ENCODE measurements at regions of chr2 and their contacts with region 1.

Region 1: GRCh38 chr2:175282290-175282689 is 100.8 kb upstream of the ATP5MC3 start:
- DNase-seq: no peak
- ATAC-seq: peak; percentile 83
- H3K4me3 ChIP-seq: no peak overlapping the region
- H3K27ac ChIP-seq: no peak overlapping the region
- H3K4me1 ChIP-seq: no peaks in the 10 kb centered on the region
- H3K27me3 ChIP-seq: no peaks in the 10 kb centered on the region; a peak in 1 of 4 replicates
- CTCF ChIP-seq: peak; percentile 24 to 49 (median 25); a peak in 4 of 6 replicates
- EP300 ChIP-seq: no peak
- POLR2A ChIP-seq: no peak
- RAD21 ChIP-seq: peak; percentile 61

Region 2: DNA sequence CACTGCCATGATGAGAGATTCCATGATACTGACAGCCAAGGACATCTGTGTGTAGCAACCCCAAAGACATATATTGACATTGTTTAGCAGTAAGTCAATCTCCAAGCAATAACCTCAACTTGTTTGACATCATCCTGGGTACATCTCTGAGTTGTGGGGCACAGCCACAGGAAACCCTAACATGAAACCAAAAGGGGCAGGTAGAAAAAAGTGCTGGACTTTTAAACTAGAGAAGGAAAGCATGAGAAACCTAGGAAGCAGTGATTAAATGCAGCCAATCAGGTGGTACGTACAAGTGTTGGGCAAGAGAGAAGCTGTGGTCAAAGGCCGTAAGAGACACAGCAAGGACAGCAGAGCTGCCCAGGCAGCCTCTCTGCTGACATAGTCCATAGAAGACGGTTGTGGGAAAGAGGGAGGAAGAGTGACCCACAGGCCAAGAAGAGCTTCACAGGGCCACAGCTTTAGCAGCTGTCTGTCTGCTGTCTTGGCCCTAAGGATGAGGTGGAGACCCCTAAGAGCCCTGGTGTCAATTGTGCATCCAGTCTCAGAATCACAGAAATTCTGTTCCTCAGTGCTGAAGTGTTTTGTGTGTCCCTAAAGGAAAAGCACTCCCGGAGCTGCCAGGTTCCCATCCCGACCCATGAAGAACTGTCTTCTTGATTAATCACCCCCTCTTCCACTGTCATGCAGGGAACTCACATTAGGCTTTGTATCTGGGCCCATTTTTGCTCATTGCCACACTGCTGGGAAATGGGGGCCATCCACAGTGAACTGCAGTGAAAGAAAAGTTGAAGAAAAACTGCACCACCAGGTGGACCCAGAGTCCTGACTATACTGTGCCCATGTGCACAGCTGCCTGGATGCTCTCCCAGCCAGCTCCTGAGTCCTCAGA is 251.7 kb before region 1 on chr2:
- CTCF ChIA-PET with region 1: interaction called, 5 read pairs
- POLR2A ChIA-PET with region 1: no interaction called
- RAD21 ChIA-PET with region 1: no interaction called
- SMC1A ChIA-PET with region 1: interaction called, 3 read pairs
- in situ Hi-C with region 1: no loop called
- intact Hi-C with region 1: loop called (anchors 5 kb)
- DNase-seq: no peak
- ATAC-seq: peak; percentile 80
- H3K4me3 ChIP-seq: no peak overlapping the region
- H3K27ac ChIP-seq: no peak overlapping the region
- H3K4me1 ChIP-seq: no peaks in the 10 kb centered on the region
- H3K27me3 ChIP-seq: no peaks in the 10 kb centered on the region
- CTCF ChIP-seq: peak; percentile 31 to 47 (median 41); a peak in 4 of 6 replicates
- EP300 ChIP-seq: no peak
- POLR2A ChIP-seq: no peak
- RAD21 ChIP-seq: peak; percentile 50

Region 3: GRCh38 chr2:175111200-175111657 is 171.1 kb before region 1 on chr2:
- CTCF ChIA-PET with region 1: interaction called, 4 read pairs
- POLR2A ChIA-PET with region 1: no interaction called
- RAD21 ChIA-PET with region 1: no interaction called
- SMC1A ChIA-PET with region 1: interaction called, 7 read pairs
- in situ Hi-C with region 1: no loop called
- intact Hi-C with region 1: loop called (anchors 1 kb)
- DNase-seq: peak; percentile 7
- ATAC-seq: peak; percentile 83
- H3K4me3 ChIP-seq: no peak overlapping the region
- H3K27ac ChIP-seq: no peak overlapping the region
- H3K4me1 ChIP-seq: no peaks in the 10 kb centered on the region
- H3K27me3 ChIP-seq: no peaks in the 10 kb centered on the region
- CTCF ChIP-seq: peak; percentile 62 to 69 (median 67)
- EP300 ChIP-seq: no peak
- POLR2A ChIP-seq: no peak
- RAD21 ChIP-seq: peak; percentile 81

Region 4: DNA sequence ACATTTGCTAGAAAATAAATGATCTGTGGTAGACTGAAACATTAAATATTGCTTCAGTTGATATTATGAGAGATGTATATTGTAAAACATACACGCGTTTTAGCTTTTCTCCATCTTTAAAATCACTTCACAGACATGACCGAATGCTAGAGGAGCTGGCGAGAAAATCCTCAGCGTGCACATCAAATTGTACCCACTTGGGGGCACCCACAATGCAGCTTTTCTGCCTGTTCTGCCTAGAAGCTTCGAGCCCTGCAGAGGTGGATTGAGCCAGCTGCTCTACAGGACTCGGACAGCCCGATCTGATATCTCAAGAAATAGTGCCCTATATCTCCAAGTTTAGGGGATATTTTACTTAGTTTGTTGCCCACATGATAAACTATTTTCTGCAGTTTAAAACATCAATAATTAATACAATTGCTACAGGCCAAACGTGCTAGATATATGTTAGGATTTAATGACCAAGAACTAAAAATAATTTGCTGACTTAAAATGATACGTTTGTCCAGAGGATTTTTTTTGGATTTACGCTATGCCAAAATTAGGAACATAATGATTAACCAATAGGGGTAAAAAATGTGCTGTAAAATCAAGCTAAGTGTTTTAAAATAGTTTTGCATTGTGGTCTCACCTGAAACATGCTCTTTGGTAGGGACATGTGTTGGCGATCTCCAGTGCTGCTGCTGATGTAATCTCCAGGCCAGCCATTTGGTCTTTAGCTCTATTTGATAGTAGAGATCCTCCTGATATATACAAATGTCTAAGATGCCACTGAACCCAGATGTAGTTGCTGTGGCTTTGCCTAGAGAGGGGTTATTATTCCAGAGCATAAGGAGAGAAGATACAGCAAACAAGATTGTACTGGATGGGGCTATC is 78.4 kb before region 1 on chr2:
- CTCF ChIA-PET with region 1: interaction called, 12 read pairs
- POLR2A ChIA-PET with region 1: no interaction called
- RAD21 ChIA-PET with region 1: no interaction called
- SMC1A ChIA-PET with region 1: interaction called, 5 read pairs
- in situ Hi-C with region 1: no loop called
- intact Hi-C with region 1: loop called (anchors 1 kb)
- DNase-seq: no peak
- ATAC-seq: peak; percentile 98
- H3K4me3 ChIP-seq: no peak overlapping the region
- H3K27ac ChIP-seq: no peak overlapping the region
- H3K4me1 ChIP-seq: no peaks in the 10 kb centered on the region
- H3K27me3 ChIP-seq: no peaks in the 10 kb centered on the region
- CTCF ChIP-seq: peak; percentile 53 to 55 (median 55)
- EP300 ChIP-seq: no peak
- POLR2A ChIP-seq: no peak
- RAD21 ChIP-seq: peak; percentile 55

Region 5: DNA sequence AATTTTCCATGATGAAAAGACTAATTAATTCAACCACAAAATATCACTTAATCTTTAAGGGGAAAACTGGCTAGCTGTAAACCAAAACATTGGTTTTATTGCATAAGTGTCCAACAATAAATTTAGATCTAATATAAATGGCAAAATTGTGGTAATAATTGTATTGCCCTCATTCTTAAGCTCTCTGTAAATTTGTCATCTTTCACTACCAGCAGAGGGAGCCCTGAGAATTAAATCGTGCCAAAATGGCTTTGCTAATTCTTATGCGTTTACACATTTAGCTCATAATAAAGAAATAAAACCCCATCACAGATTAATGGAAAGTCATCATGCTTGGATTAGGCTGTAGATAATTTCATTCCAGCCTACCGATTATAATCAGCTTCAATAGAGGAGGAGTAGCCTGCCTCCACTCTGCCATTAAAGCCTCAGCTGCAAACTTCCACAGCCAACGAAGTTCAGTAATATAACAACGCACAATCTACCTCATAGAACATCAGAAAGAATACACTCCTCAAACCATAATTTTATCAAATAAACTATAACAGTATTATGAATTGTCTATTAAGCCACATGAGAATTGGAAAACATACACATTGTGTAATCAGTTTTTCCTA is 30.8 kb before region 1 on chr2:
- CTCF ChIA-PET with region 1: interaction called, 46 read pairs
- POLR2A ChIA-PET with region 1: no interaction called
- RAD21 ChIA-PET with region 1: interaction called, 3 read pairs
- SMC1A ChIA-PET with region 1: interaction called, 7 read pairs
- in situ Hi-C with region 1: no loop called
- intact Hi-C with region 1: no loop called
- DNase-seq: no peak
- ATAC-seq: peak; percentile 56; the same call in 2 of the 3 replicates
- H3K4me3 ChIP-seq: no peak overlapping the region
- H3K27ac ChIP-seq: no peak overlapping the region
- H3K4me1 ChIP-seq: no peaks in the 10 kb centered on the region
- H3K27me3 ChIP-seq: peaks cover 0 to 1% of the 10 kb centered on the region in 2 experiments; a peak in 2 of 4 replicates
- CTCF ChIP-seq: peak; percentile 44 to 53 (median 45)
- EP300 ChIP-seq: no peak
- POLR2A ChIP-seq: no peak
- RAD21 ChIP-seq: peak; percentile 45

Region 6: DNA sequence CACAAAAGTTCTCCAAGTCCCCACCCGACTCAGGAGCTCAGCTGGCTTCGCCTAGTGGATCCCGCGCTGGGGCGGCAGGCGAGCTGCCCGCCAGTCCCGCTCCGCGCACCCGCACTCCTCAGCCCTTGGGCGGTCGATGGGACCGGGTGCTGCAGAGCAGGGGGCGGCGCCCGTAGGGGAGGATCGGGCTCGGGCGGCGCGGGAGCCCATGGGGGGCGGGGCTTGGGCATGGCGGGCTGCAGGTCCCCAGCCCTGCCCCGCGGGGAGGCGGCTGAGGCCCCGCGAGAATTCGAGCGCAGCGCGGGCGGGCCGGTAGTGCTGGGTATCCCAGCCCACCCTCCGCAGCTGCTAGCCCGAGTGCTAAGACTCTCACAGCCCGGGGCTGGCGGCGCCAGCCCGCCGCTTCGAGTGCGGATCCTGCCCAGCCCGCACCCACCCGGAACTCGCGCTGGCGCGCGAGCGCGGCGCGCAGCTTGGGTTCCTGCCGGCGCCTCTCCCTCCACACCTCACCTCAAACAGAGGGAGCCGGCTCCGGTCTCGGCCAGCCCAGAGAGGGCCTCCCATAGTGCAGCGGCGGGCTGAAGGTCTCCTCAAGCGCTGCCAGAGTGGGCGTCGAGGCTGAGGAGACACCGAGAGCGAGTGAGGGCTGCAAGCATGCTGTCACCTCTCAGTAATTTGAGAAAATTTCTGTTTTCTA is 25.3 kb before region 1 on chr2:
- CTCF ChIA-PET with region 1: interaction called, 46 read pairs
- POLR2A ChIA-PET with region 1: no interaction called
- RAD21 ChIA-PET with region 1: no interaction called
- SMC1A ChIA-PET with region 1: interaction called, 7 read pairs
- in situ Hi-C with region 1: no loop called
- intact Hi-C with region 1: no loop called
- DNase-seq: no peak
- ATAC-seq: no peak
- H3K4me3 ChIP-seq: no peak overlapping the region
- H3K27ac ChIP-seq: no peak overlapping the region
- H3K4me1 ChIP-seq: no peaks in the 10 kb centered on the region
- H3K27me3 ChIP-seq: no peaks in the 10 kb centered on the region; a peak in 1 of 4 replicates
- CTCF ChIP-seq: no peak
- EP300 ChIP-seq: no peak
- POLR2A ChIP-seq: no peak
- RAD21 ChIP-seq: no peak

Region 7: DNA sequence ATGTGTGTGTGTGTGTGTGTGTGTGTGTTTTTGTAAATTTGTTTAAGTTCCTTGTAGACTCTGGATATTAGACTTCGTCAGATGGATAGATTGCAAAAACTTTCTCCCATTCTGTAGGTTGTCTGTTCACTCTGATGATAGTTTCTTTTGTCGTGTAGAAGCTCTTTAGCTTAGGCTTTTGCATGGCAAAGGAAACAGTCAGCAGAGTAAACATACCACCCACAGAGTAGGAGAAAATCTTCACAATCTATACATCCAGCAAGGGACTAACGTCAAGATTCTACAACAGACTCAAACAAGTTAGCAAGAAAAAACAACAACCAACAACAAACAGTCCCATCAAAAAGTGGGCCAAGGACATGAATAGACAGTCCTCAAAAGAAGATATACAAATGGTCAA is 235.9 kb after region 1 on chr2:
- CTCF ChIA-PET with region 1: no interaction called
- POLR2A ChIA-PET with region 1: no interaction called
- RAD21 ChIA-PET with region 1: no interaction called
- SMC1A ChIA-PET with region 1: no interaction called
- in situ Hi-C with region 1: no loop called
- intact Hi-C with region 1: no loop called
- DNase-seq: no peak
- ATAC-seq: no peak
- H3K4me3 ChIP-seq: no peak overlapping the region
- H3K27ac ChIP-seq: no peak overlapping the region
- H3K4me1 ChIP-seq: no peaks in the 10 kb centered on the region
- H3K27me3 ChIP-seq: no peaks in the 10 kb centered on the region
- CTCF ChIP-seq: no peak
- EP300 ChIP-seq: no peak
- POLR2A ChIP-seq: no peak
- RAD21 ChIP-seq: no peak